ENCODE measurements at regions of chr4 and their contacts with region 1.

Region 1: GRCh38 chr4:109977854-109978501 is 65.3 kb downstream of the EGF start:
- DNase-seq: no peak

Region 2: GRCh38 chr4:109424093-109424841 is 553.7 kb before region 1 on chr4:
- intact Hi-C with region 1: loop called (anchors 2 kb)
- DNase-seq: no peak

Region 3: DNA sequence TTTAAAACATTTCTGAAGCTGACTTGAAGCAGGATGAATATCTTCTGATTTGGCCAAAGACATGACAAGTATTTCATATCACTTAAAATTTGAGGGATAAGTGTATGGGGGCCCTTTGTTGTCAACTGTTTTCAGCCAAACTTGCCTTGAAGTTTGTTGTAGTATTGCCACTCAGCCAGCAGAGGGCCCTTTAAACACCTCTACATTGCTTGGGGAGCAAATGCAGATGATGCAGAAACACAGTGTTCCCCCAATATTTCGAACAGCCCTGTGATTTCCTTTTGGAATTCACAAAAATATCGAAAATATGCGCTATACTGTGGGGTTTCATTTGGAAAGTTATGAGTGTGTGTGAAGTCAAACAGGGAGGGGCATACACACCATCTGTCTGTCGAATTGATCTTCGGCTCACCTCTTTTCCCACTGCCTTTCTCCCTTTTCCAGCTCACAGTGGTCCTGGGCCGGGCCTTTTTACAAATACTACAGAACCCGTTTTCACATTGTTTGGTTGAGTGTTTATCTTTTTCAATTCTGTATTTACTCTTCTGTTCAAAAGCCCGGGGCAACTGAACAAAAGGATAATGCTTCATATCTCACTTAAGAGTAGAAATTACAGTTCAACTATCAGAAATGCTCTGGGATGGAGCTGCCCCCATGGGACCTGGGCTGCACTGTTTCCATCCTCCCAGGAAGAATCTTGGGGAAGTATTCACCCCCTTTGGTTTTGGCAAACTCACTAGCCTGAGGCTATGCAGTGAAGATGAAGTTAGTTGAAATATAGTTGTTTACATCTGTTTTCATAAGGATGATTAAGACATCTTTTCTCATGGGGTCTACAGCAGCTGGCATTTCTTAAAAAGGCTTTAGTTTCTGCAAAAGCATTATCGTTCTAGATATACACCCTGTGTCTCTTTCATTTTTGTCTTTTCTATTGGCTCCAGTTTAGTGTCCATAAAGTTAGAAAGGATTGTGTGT is 72.3 kb after region 1 on chr4:
- intact Hi-C with region 1: no loop called
- DNase-seq: no peak

Measured in cardiac septum (tissue), 1 donor.